ENCODE measurements at regions of chrX and their contacts with region 1.

Region 1: DNA sequence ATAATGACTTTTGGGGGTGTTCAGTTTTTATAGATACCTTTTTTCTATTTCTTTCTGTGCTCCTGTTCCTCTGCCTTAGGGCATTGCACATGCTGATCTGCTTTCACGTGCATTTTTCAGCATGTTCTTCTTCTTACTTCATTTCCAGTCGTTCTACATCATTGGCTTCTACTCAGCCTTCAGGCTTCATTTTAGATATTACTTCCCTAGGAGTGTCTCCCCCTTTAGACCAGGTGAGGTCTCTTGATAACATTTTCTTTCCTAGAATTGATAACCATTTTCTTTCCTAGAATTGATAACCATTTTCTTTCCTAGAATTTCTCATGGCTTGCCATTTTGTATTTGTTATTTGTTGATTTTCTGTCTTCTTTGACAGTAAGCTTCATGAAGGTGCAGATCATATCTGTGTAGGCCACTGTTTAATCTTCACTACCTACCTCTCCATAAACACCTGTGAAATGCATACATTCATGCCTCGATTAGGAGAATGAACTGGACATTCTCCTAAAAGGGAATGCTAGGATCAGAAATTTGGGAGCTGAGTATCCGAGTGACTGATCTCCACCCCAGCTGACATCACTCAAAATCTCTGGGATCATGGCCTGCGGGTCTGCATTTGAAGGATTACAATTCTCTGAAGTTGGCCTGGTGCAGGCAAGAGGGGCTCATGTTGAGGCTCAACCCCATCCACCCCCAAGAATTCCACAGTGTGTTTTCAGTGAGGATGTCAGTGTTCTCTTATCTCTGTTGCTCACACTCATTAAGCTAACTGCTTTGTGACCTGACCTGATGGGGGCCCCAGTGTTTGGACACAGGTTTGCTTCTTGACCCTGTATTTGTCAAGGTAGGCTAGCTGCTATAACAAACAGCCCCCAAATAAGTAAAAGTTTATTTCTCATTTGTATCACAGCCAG is 45.7 kb downstream of the GYG2 start:
- DNase-seq: no peak
- H3K4me3 ChIP-seq: no peak overlapping the region
- CTCF ChIP-seq: no peak

Region 2: GRCh38 chrX:2928191-2928763 is 53.8 kb after region 1 on chrX:
- in situ Hi-C with region 1: loop called (anchors 5 kb)
- DNase-seq: peak; percentile 31
- H3K4me3 ChIP-seq: peak overlapping the region; percentile 67
- CTCF ChIP-seq: no peak

Measured in astrocyte of the cerebellum (primary cell).